Astrocyte of the cerebellum (primary cell): ENCODE measurements at regions of chr2 and their contacts with region 1.

Region 1: DNA sequence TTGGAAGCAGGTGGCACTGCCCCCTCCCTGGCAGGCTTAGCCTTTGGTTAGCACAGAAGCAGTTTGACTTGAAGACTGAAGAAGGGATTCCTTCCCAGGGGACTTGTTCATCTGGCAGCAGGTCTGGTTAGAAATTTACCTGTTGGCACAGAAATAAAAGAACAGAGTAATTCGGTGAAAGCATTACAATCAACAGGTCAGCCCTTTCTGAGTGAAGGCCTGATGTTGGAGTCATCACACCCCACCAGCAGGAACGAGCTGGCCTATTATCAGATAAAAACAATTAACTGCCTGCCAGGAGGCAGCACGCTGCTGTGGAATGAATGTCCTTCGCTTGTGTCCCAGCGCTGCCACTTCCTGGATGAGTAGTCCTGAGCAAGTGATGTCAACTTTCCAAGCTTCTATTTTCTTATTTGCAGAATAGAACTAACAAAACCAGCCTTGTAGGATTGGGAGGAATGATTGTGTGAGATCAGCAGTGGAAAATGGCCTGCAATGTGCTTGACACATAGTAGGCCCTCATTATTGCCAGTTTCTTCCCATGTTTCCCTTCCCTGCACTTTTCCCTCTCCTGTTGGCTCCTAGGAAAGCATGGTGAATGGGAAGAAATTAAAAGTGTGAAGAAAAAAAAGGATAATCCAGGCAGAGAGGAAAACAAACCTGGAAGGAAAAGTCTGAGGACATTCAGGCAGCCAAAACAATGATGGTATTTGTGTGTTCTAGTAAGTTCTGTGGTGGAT is 29.0 kb downstream of the LGALSL start:
- DNase-seq: no peak
- H3K4me3 ChIP-seq: no peak overlapping the region
- CTCF ChIP-seq: no peak

Region 2: DNA sequence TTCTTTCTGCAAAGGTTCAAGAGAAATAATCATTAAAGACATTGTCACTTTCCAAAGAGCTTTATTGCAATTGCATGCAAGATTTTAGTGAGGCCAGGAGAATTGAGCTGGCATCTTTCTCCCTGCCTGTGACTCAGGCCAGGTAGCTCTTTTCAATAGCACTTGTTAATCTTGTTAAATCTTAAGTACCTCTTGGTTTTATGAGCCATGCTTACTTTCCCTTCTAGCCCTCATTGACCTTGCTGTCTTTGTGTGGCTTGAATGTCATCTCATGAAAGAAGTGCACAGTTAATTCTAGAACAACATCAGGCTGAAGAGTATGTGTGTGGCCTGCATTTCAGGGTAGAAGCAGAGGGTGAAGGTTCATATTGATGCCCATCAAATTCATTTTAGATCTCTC is 43.7 kb before region 1 on chr2:
- in situ Hi-C with region 1: loop called (anchors 5 kb)
- DNase-seq: no peak
- H3K4me3 ChIP-seq: no peak overlapping the region
- CTCF ChIP-seq: no peak

Region 3: DNA sequence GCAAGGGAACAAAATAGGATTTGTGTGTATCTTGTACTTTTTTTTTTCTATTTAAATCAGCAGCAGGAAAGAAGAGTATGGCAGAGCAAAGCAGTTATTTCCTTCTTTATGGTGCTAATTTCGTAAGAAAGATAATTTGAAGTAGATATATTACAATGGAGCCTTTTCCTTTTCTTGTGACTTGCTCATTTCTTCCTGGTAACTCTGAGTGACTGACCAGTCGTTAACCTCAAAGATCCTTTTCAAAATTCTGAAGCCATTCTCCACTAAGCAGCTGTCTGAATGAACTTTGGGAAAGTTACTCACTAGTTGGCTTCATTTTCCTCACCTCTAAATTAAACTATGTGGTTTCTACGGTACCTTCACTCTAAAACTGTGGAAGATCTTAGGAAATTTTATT is 65.8 kb after region 1 on chr2:
- in situ Hi-C with region 1: no loop called
- DNase-seq: no peak
- H3K4me3 ChIP-seq: no peak overlapping the region
- CTCF ChIP-seq: no peak

Region 4: GRCh38 chr2:64574871-64575270 is 91.9 kb after region 1 on chr2:
- in situ Hi-C with region 1: loop called (anchors 5 kb)
- DNase-seq: no peak
- H3K4me3 ChIP-seq: no peak overlapping the region
- CTCF ChIP-seq: no peak